ENCODE measurements at regions of chr12 and their contacts with region 1.

Region 1: DNA sequence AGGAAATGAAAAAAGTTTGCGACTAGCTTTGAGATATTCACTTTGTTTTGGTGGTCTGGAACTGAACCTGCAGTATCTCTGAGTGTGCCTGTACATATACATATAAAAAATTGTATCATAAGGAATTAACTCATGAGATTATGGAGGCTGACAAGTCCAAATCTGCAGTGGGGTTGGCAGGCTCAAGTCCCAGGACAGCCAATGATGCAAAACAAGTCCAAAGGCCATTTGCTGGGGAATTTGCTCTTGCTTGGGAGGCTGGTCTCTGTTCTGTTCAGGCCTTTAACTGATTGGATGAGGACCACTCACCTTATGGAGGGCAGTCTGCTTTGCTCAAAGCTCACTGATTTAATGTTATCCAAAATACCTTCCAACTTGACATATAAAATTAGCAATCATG is 66.8 kb downstream of the FGD4 start:
- DNase-seq: no peak
- H3K4me3 ChIP-seq: no peak overlapping the region
- H3K4me3 Mint-ChIP-seq: no peak overlapping the region
- H3K27ac Mint-ChIP-seq: no peak overlapping the region
- H3K4me1 ChIP-seq: peaks cover 25% of the 10 kb centered on the region
- H3K4me1 Mint-ChIP-seq: peaks cover 15% of the 10 kb centered on the region
- H3K27me3 ChIP-seq: no peaks in the 10 kb centered on the region
- H3K27me3 Mint-ChIP-seq: no peaks in the 10 kb centered on the region
- CTCF ChIP-seq: no peak

Region 2: GRCh38 chr12:32407795-32408194 is 58.4 kb before region 1 on chr12:
- CTCF ChIA-PET with region 1: no interaction called
- POLR2A ChIA-PET with region 1: no interaction called
- intact Hi-C with region 1: no loop called
- DNase-seq: no peak
- H3K4me3 ChIP-seq: no peak overlapping the region
- H3K4me3 Mint-ChIP-seq: no peak overlapping the region
- H3K27ac Mint-ChIP-seq: peak overlapping the region; percentile 1
- H3K4me1 ChIP-seq: no peaks in the 10 kb centered on the region
- H3K4me1 Mint-ChIP-seq: peaks cover 6% of the 10 kb centered on the region
- H3K27me3 ChIP-seq: no peaks in the 10 kb centered on the region
- H3K27me3 Mint-ChIP-seq: no peaks in the 10 kb centered on the region
- CTCF ChIP-seq: no peak

Region 3: GRCh38 chr12:32512910-32513309 is 46.7 kb after region 1 on chr12:
- CTCF ChIA-PET with region 1: interaction called, 10 read pairs
- POLR2A ChIA-PET with region 1: no interaction called
- intact Hi-C with region 1: no loop called
- DNase-seq: no peak
- H3K4me3 ChIP-seq: no peak overlapping the region
- H3K4me3 Mint-ChIP-seq: no peak overlapping the region
- H3K27ac Mint-ChIP-seq: no peak overlapping the region
- H3K4me1 ChIP-seq: peaks cover 18% of the 10 kb centered on the region
- H3K4me1 Mint-ChIP-seq: peaks cover 36% of the 10 kb centered on the region
- H3K27me3 ChIP-seq: no peaks in the 10 kb centered on the region
- H3K27me3 Mint-ChIP-seq: no peaks in the 10 kb centered on the region
- CTCF ChIP-seq: no peak